Activated CD4-positive, alpha-beta T cell treated with anti-CD3 and anti-CD28 coated beads, Interleukin-2, amount 10 ng/mL, durations not matched to agents 24 days and 14 days (primary cell): ENCODE measurements at regions of chr10 and their contacts with region 1.

Region 1: DNA sequence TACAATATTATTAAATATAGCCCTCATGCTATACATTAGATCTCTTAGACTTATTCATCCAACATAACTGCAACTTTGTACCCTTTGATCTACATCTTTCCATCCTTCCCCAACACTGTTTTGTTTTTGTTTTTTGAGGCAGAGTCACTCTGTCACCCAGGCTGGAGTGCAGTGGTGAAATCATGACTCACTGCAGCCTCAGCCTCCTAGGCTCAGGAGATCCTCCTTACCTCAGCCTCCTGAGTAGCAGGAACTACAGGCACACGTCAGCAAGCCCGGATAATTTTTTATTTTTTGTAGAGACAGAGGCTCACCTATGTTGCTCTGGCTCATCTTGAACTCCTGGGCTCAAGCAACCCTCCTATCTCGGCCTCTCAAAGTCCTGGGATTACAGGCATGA is 53.3 kb downstream of the NT5C2 start:
- DNase-seq: no peak
- H3K4me3 Mint-ChIP-seq: no peak overlapping the region
- H3K27ac Mint-ChIP-seq: peak overlapping the region; percentile 27
- H3K4me1 Mint-ChIP-seq: peaks cover 8% of the 10 kb centered on the region
- H3K27me3 Mint-ChIP-seq: no peaks in the 10 kb centered on the region

Region 2: GRCh38 chr10:102927311-102928010 is 212.3 kb before region 1 on chr10:
- intact Hi-C with region 1: no loop called
- DNase-seq: no peak
- H3K4me3 Mint-ChIP-seq: no peak overlapping the region
- H3K27ac Mint-ChIP-seq: no peak overlapping the region
- H3K4me1 Mint-ChIP-seq: peaks cover 17% of the 10 kb centered on the region
- H3K27me3 Mint-ChIP-seq: no peaks in the 10 kb centered on the region

Region 3: GRCh38 chr10:103192451-103193106 is 52.8 kb after region 1 on chr10:
- intact Hi-C with region 1: loop called (anchors 10 kb)
- DNase-seq: peak; percentile 91
- H3K4me3 Mint-ChIP-seq: peak overlapping the region; percentile 100
- H3K27ac Mint-ChIP-seq: peak overlapping the region; percentile 99
- H3K4me1 Mint-ChIP-seq: peaks cover 31% of the 10 kb centered on the region
- H3K27me3 Mint-ChIP-seq: no peaks in the 10 kb centered on the region

Region 4: GRCh38 chr10:103542764-103543616 is 403.2 kb after region 1 on chr10:
- intact Hi-C with region 1: no loop called
- DNase-seq: peak; percentile 78
- H3K4me3 Mint-ChIP-seq: peak overlapping the region; percentile 71
- H3K27ac Mint-ChIP-seq: peak overlapping the region; percentile 64
- H3K4me1 Mint-ChIP-seq: peaks cover 15% of the 10 kb centered on the region
- H3K27me3 Mint-ChIP-seq: peaks cover 18% of the 10 kb centered on the region